ENCODE measurements at regions of chr20 and their contacts with region 1.

Region 1: GRCh38 chr20:37294262-37294981 is 5.0 kb downstream of the MANBAL start:
- DNase-seq: no peak
- ATAC-seq: no peak
- H3K4me3 Mint-ChIP-seq: no peak overlapping the region
- H3K27ac Mint-ChIP-seq: no peak overlapping the region
- H3K4me1 Mint-ChIP-seq: peaks cover 54% of the 10 kb centered on the region
- H3K27me3 Mint-ChIP-seq: no peaks in the 10 kb centered on the region

Region 2: GRCh38 chr20:37220731-37221130 is 73.7 kb before region 1 on chr20:
- CTCF ChIA-PET with region 1: no interaction called
- POLR2A ChIA-PET with region 1: no interaction called
- intact Hi-C with region 1: no loop called
- DNase-seq: no peak
- ATAC-seq: no peak
- H3K4me3 Mint-ChIP-seq: no peak overlapping the region
- H3K27ac Mint-ChIP-seq: no peak overlapping the region
- H3K4me1 Mint-ChIP-seq: no peaks in the 10 kb centered on the region
- H3K27me3 Mint-ChIP-seq: no peaks in the 10 kb centered on the region

Region 3: GRCh38 chr20:37276494-37277252 is 17.7 kb before region 1 on chr20:
- CTCF ChIA-PET with region 1: no interaction called
- POLR2A ChIA-PET with region 1: no interaction called
- intact Hi-C with region 1: no loop called
- DNase-seq: peak; percentile 45
- ATAC-seq: peak; percentile 86
- H3K4me3 Mint-ChIP-seq: no peak overlapping the region
- H3K27ac Mint-ChIP-seq: no peak overlapping the region
- H3K4me1 Mint-ChIP-seq: peaks cover 4% of the 10 kb centered on the region
- H3K27me3 Mint-ChIP-seq: peaks cover 1% of the 10 kb centered on the region

Region 4: GRCh38 chr20:37308086-37309050 is 13.9 kb after region 1 on chr20:
- CTCF ChIA-PET with region 1: interaction called, 3 read pairs
- POLR2A ChIA-PET with region 1: no interaction called
- intact Hi-C with region 1: loop called in 1 of 2 experiments (anchors 1 kb)
- DNase-seq: peak; percentile 43
- ATAC-seq: peak; percentile 98
- H3K4me3 Mint-ChIP-seq: no peak overlapping the region
- H3K27ac Mint-ChIP-seq: peak overlapping the region; percentile 74
- H3K4me1 Mint-ChIP-seq: peaks cover 16% of the 10 kb centered on the region
- H3K27me3 Mint-ChIP-seq: no peaks in the 10 kb centered on the region

Region 5: GRCh38 chr20:37345339-37346230 is 51.2 kb after region 1 on chr20 and contains the start of gene SRC:
- CTCF ChIA-PET with region 1: interaction called, 3 read pairs
- POLR2A ChIA-PET with region 1: no interaction called
- intact Hi-C with region 1: loop called (anchors 2 to 5 kb)
- DNase-seq: peak; percentile 71
- ATAC-seq: peak; percentile 62
- H3K4me3 Mint-ChIP-seq: peak within 1 kb of the TSS; percentile 68
- H3K27ac Mint-ChIP-seq: peak within 1 kb of the TSS; percentile 49
- H3K4me1 Mint-ChIP-seq: peaks cover 11% of the 10 kb centered on the region
- H3K27me3 Mint-ChIP-seq: no peaks in the 10 kb centered on the region
- total RNA-seq, gene SRC: 4.2 to 5.7 TPM

Region 6: GRCh38 chr20:37384683-37385174 is 90.3 kb after region 1 on chr20:
- CTCF ChIA-PET with region 1: interaction called, 3 read pairs
- POLR2A ChIA-PET with region 1: interaction called, 3 read pairs
- intact Hi-C with region 1: loop called in 1 of 2 experiments (anchors 1 kb)
- DNase-seq: peak; percentile 86
- ATAC-seq: peak; percentile 94
- H3K4me3 Mint-ChIP-seq: peak overlapping the region; percentile 59
- H3K27ac Mint-ChIP-seq: peak overlapping the region; percentile 43
- H3K4me1 Mint-ChIP-seq: peaks cover 8% of the 10 kb centered on the region
- H3K27me3 Mint-ChIP-seq: peaks cover 4% of the 10 kb centered on the region

Region 7: DNA sequence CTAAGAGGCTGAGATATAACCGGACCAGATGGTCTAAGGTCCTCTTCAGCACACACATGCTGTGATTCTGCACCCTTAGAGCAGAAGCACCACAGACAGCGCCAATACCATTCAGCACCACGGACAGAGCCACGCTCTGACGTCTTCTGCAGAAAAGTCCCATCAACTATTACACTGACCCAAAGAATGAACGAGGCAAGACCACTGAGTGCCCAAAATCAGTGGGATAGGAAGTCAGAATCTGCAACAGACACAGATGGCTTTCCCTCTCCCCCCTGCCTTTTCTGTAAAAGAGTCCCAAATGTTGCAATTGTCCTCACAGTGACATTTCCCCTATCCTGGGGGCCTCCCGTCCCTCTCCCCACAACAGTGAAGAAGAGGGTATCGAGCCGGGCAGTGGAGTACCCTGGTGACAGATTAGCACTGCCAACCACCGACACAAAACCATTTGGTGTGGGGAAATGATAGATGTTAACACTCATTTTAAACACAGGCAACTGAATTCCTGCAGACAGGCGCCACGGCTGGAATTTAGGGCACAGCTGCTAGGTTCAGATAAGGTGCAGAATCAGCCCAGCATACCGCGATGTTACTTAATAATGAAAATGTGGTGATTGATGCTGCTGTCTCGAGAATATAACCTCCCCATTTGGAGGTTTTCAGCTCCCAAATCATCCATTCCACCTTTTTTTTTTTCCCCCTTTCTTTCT is 332.8 kb after region 1 on chr20:
- CTCF ChIA-PET with region 1: no interaction called
- POLR2A ChIA-PET with region 1: no interaction called
- intact Hi-C with region 1: no loop called
- DNase-seq: peak; percentile 66
- ATAC-seq: no peak
- H3K4me3 Mint-ChIP-seq: no peak overlapping the region
- H3K27ac Mint-ChIP-seq: no peak overlapping the region
- H3K4me1 Mint-ChIP-seq: no peaks in the 10 kb centered on the region
- H3K27me3 Mint-ChIP-seq: peaks cover 49% of the 10 kb centered on the region